ENCODE measurements at regions of chr4 and their contacts with region 1.

Region 1: DNA sequence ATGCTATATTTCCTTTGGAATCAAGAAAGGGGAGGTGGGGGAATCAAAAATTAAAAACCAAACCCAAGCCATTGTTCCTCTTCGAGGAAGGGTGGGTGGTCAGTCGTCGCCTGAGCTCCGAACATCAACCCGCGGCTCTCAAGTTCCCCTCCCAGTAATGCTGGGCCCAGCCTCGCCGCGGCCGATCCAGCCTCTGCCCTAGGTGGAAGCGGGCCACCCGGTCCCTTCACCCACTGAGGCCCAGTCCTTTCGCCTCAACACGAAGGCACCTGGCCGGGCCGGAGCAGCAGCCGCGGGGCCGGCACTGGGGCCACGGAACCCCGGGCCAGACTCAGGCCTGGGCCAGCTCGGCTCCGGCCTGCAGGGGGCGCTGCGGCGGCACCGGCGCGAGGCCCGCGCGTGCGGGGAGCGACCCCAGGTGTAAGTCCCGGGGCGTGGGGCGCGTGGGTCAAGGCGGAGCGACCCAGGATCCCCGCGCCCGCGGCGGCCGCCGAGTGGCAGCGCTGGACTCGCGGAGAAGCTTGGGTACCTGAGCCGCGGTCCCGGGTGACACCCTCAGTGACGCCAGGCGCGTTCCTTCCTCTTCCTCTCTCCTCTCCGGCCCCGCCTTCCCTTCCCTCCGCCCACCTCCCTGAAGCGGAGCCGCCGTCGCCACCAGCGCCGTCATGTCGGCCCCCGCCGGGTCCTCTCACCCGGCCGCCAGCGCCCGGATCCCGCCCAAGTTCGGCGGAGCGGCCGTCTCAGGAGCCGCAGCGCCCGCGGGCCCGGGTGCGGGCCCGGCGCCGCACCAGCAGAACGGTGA is at the start of gene SEC24B:
- DNase-seq: no peak
- H3K4me3 ChIP-seq: peak within 1 kb of the TSS; percentile 79
- CTCF ChIP-seq: peak; percentile 63

Region 2: GRCh38 chr4:109444182-109444844 is 10.9 kb after region 1 on chr4:
- CTCF ChIA-PET with region 1: interaction called, 15 read pairs
- POLR2A ChIA-PET with region 1: no interaction called
- DNase-seq: no peak
- H3K4me3 ChIP-seq: no peak overlapping the region
- CTCF ChIP-seq: no peak

Region 3: DNA sequence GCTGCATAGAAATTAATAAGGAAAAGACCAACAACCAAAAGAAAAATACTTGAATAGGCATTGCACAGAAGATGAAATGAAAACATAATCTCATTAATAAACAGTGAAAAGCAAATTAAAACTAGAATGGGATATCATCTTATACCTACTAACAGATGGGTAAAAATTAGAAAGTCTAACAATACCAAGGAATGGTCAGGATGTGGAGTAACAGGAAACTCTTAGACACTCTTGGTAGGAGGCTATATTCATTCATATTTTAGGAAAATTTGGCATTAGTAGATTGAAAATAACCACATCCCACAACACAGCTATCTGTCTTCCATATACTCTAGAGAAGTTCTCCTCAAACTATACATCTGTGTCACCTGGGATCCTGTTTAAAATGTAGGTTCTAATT is 36.5 kb after region 1 on chr4:
- CTCF ChIA-PET with region 1: interaction called, 11 read pairs
- POLR2A ChIA-PET with region 1: no interaction called
- DNase-seq: no peak
- H3K4me3 ChIP-seq: no peak overlapping the region
- CTCF ChIP-seq: no peak

Region 4: DNA sequence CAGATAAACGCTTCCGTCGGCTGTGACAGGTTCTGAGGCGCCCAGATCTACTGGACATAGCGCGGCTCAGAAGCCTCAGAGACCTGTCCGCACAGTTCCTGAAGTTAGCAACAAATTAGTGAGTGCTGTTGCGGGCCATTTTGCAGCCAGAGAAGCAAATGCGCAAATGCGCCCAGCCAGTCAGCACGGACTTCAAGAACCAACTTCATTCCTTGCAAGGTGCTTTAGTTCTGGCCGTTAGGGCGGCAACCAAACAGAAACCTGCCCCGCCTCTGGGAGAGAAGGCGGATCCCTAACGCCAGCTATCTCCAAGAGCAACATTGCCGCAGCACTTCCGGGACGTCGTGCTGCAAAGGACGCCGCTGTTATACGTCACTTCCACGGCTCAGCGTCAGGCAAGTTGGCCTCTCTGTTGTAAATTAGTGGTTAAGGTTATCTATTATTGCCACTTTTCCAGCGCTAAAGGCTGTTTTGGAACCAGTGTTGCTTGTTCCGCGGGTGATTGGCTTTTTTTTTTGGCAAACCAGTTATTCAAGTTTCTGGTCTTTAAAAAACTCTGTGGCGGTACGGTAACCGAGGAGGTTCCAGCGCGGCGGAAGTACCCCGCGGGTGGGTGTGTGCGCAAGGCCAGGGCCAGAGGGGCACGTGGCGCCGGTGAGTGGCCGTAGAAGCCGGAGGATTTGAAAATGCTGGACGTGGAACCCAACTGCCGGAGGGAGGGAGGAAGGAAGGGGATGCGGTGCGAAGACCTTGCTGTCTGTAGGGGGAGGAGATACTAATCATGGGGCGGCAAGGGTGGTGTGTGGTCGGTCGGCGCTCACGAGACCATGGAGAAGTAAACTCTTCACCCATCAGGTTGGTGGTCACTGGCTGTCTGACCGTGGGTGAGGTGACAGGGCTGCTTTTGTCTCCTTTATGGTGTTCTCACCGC is 382.0 kb after region 1 on chr4 and contains the start of gene GAR1:
- CTCF ChIA-PET with region 1: interaction called, 11 read pairs
- POLR2A ChIA-PET with region 1: no interaction called
- DNase-seq: peak; percentile 46
- H3K4me3 ChIP-seq: peak within 1 kb of the TSS; percentile 98
- CTCF ChIP-seq: no peak

Region 5: GRCh38 chr4:109977854-109978501 is 544.6 kb after region 1 on chr4:
- CTCF ChIA-PET with region 1: interaction called, 146 read pairs
- POLR2A ChIA-PET with region 1: no interaction called
- DNase-seq: no peak
- H3K4me3 ChIP-seq: no peak overlapping the region
- CTCF ChIP-seq: peak; percentile 38

Measured in AG04449 (cell line).